ENCODE measurements at regions of chr15 and their contacts with region 1.

Region 1: GRCh38 chr15:73240866-73241499 is 127.8 kb downstream of the HCN4 start:
- DNase-seq: peak; percentile 66 to 74
- H3K4me3 ChIP-seq: no peak overlapping the region
- H3K4me3 Mint-ChIP-seq: no peak overlapping the region
- H3K27ac Mint-ChIP-seq: no peak overlapping the region
- H3K4me1 ChIP-seq: no peaks in the 10 kb centered on the region
- H3K4me1 Mint-ChIP-seq: no peaks in the 10 kb centered on the region
- H3K27me3 ChIP-seq: no peaks in the 10 kb centered on the region
- H3K27me3 Mint-ChIP-seq: no peaks in the 10 kb centered on the region
- CTCF ChIP-seq: peak; percentile 69 to 71

Region 2: GRCh38 chr15:72783563-72784237 is 457.3 kb before region 1 on chr15 and contains the start of gene ADPGK:
- CTCF ChIA-PET with region 1: no interaction called
- POLR2A ChIA-PET with region 1: no interaction called
- intact Hi-C with region 1: loop called (anchors 10 kb)
- DNase-seq: peak; percentile 84 to 94
- H3K4me3 ChIP-seq: peak within 1 kb of the TSS; percentile 93
- H3K4me3 Mint-ChIP-seq: peak within 1 kb of the TSS; percentile 95
- H3K27ac Mint-ChIP-seq: peak within 1 kb of the TSS; percentile 94
- H3K4me1 ChIP-seq: 0 out of 2 replicates have a peak, but pooled peaks cover 6% of the 10 kb centered on the region
- H3K4me1 Mint-ChIP-seq: peaks cover 6% of the 10 kb centered on the region
- H3K27me3 ChIP-seq: no peaks in the 10 kb centered on the region
- H3K27me3 Mint-ChIP-seq: peaks cover 5% of the 10 kb centered on the region
- CTCF ChIP-seq: no peak
- total RNA-seq, gene ADPGK: 52.6 and 55.6 TPM in 2 replicates

Region 3: GRCh38 chr15:73081321-73081958 is 159.5 kb before region 1 on chr15:
- CTCF ChIA-PET with region 1: no interaction called
- POLR2A ChIA-PET with region 1: no interaction called
- intact Hi-C with region 1: loop called (anchors 5 kb)
- DNase-seq: peak in 1 of 2 experiments; percentile 30
- H3K4me3 ChIP-seq: no peak overlapping the region
- H3K4me3 Mint-ChIP-seq: no peak overlapping the region
- H3K27ac Mint-ChIP-seq: no peak overlapping the region
- H3K4me1 ChIP-seq: no peaks in the 10 kb centered on the region
- H3K4me1 Mint-ChIP-seq: no peaks in the 10 kb centered on the region
- H3K27me3 ChIP-seq: no peaks in the 10 kb centered on the region
- H3K27me3 Mint-ChIP-seq: no peaks in the 10 kb centered on the region
- CTCF ChIP-seq: peak; percentile 55 to 67

Region 4: DNA sequence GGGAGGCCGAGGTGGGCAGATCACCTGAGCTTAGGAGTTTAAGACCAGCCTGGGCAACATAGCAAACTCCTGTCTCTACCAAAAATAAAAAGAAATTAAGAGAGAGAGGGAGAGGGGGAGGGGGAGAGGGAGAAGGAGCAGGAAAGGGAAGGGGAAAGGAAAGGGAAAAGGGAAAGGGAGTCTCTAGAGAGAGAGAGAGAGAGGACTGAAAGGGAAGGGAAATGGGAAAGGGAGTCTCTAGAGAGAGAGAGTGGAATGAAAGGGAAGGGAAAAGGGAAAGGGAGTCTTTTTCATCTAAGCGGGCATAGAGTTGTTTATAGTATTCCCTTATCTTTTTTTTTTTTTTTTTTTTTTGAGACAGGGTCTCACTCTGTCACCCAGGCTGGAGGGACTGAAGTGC is 40.6 kb before region 1 on chr15:
- CTCF ChIA-PET with region 1: no interaction called
- POLR2A ChIA-PET with region 1: interaction called, 10 read pairs
- intact Hi-C with region 1: no loop called
- DNase-seq: no peak
- H3K4me3 ChIP-seq: no peak overlapping the region
- H3K4me3 Mint-ChIP-seq: no peak overlapping the region
- H3K27ac Mint-ChIP-seq: no peak overlapping the region
- H3K4me1 ChIP-seq: no peaks in the 10 kb centered on the region
- H3K4me1 Mint-ChIP-seq: no peaks in the 10 kb centered on the region
- H3K27me3 ChIP-seq: no peaks in the 10 kb centered on the region
- H3K27me3 Mint-ChIP-seq: peaks cover 4% of the 10 kb centered on the region
- CTCF ChIP-seq: no peak

Region 5: DNA sequence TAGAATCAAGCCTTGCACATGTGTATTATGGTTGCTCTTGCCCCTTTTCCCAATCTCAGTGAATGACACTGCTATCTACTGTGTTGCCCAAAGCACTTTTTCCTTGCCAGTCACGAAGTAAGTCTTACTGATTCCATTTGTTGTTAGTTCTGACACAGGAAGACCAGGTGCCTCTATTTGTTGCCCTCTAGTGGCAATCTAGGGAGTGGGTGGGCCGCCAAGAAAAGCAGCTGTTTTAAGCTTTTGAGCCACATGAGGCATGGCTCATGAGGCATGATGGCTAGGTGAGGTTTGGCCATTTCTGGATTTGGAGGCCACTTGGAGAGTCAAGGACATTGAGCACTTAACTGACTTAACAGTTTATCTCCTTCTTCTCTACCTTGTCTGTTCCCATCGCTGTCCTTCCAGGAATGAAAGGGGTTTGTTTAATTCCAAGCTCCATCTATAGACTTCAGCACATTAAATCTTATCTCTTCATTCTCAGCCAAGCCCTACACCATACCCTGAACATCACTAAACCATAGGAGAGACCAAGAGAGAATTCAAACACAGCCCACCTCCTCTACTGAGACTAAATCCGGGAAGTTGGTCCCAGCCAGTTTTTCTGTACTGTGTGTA is 24.7 kb after region 1 on chr15:
- CTCF ChIA-PET with region 1: interaction called, 10 read pairs
- POLR2A ChIA-PET with region 1: no interaction called
- intact Hi-C with region 1: loop called (anchors 1 kb)
- DNase-seq: peak; percentile 58 to 60
- H3K4me3 ChIP-seq: no peak overlapping the region
- H3K4me3 Mint-ChIP-seq: no peak overlapping the region
- H3K27ac Mint-ChIP-seq: no peak overlapping the region
- H3K4me1 ChIP-seq: no peaks in the 10 kb centered on the region
- H3K4me1 Mint-ChIP-seq: no peaks in the 10 kb centered on the region
- H3K27me3 ChIP-seq: no peaks in the 10 kb centered on the region
- H3K27me3 Mint-ChIP-seq: no peaks in the 10 kb centered on the region
- CTCF ChIP-seq: peak; percentile 71 to 83

Region 6: DNA sequence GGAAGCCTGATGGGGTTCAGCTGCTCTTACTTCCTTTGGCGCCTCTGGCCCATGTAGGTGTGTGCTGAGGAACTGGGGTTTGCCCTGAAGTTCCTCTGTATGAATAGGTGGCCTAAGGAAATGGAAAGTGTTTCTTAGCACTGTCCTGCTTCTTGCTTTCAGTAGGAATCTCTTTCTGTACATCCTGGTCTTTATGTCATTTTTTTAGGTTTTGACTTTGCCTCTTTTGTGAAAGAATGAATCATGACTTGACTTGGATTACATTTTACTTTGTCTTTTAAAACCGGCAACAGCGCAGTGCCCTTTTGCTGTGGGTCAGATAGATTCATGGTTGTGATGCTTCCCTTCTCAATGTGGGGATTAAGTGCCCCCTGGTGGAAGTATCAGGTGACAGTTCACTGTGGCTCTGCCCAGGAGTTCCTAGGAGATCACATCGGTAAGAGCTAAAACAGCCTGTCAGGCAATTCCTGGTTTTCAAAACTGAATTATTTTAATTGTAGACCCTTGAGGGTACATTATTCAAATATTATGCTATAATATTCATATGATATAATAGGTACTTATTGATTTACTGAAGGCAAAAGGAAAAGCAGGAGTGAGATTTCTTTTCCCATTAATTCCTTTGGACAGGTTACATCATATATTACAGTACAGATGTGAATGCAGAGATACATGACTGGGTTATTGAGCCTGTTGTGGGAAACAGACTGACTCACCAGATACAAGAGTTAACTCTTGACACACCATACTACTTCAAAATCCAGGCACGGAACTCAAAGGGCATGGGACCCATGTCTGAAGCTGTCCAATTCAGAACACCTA is 32.4 kb after region 1 on chr15:
- CTCF ChIA-PET with region 1: interaction called, 14 read pairs
- POLR2A ChIA-PET with region 1: no interaction called
- intact Hi-C with region 1: loop called (anchors 1 kb)
- DNase-seq: peak; percentile 43 to 54
- H3K4me3 ChIP-seq: no peak overlapping the region
- H3K4me3 Mint-ChIP-seq: no peak overlapping the region
- H3K27ac Mint-ChIP-seq: no peak overlapping the region
- H3K4me1 ChIP-seq: no peaks in the 10 kb centered on the region
- H3K4me1 Mint-ChIP-seq: no peaks in the 10 kb centered on the region
- H3K27me3 ChIP-seq: no peaks in the 10 kb centered on the region
- H3K27me3 Mint-ChIP-seq: no peaks in the 10 kb centered on the region
- CTCF ChIP-seq: peak; percentile 63 to 69

Measured in Caco-2 (cell line).